Naive thymus-derived CD4-positive, alpha-beta T cell (primary cell): ENCODE measurements at regions of chr1 and their contacts with region 1.

Region 1: GRCh38 chr1:225881969-225882693 is at the start of gene TMEM63A:
- DNase-seq: peak; percentile 83 to 89 (median 87)
- ATAC-seq: peak; percentile 84
- H3K4me3 ChIP-seq: peak within 1 kb of the TSS; percentile 80
- H3K4me3 Mint-ChIP-seq: peak within 1 kb of the TSS; percentile 89 to 99 (median 97)
- H3K27ac ChIP-seq: peak within 1 kb of the TSS; percentile 90
- H3K27ac Mint-ChIP-seq: peak within 1 kb of the TSS; percentile 91 to 98 (median 96)
- H3K4me1 ChIP-seq: peaks cover 41% of the 10 kb centered on the region in 2 donors
- H3K4me1 Mint-ChIP-seq: peaks cover 37 to 50% (median 48%) of the 10 kb centered on the region in 7 donors
- H3K27me3 ChIP-seq: no peaks in the 10 kb centered on the region
- H3K27me3 Mint-ChIP-seq: peaks cover 0 to 21% (median 0%) of the 10 kb centered on the region in 5 donors
- total RNA-seq, gene TMEM63A: 189 to 611 (median 383) TPM

Region 2: GRCh38 chr1:225845571-225846259 is 36.4 kb before region 1 on chr1:
- CTCF ChIA-PET with region 1: interaction called, 4 read pairs
- POLR2A ChIA-PET with region 1: interaction called, 60 read pairs
- intact Hi-C with region 1: loop called in 1 of 2 experiments (anchors 2 kb)
- DNase-seq: peak in 4 of 9 donors; percentile 35 to 55 (median 46)
- ATAC-seq: peak; percentile 36
- H3K4me3 ChIP-seq: no peak overlapping the region
- H3K4me3 Mint-ChIP-seq: no peak overlapping the region
- H3K27ac ChIP-seq: no peak overlapping the region
- H3K27ac Mint-ChIP-seq: peak overlapping the region in 6 of 9 donors; percentile 12 to 98 (median 36)
- H3K4me1 ChIP-seq: peaks cover 37 to 38% of the 10 kb centered on the region in 2 donors
- H3K4me1 Mint-ChIP-seq: peaks cover 19 to 50% (median 43%) of the 10 kb centered on the region in 7 donors
- H3K27me3 ChIP-seq: no peaks in the 10 kb centered on the region
- H3K27me3 Mint-ChIP-seq: no peaks in the 10 kb centered on the region

Region 3: DNA sequence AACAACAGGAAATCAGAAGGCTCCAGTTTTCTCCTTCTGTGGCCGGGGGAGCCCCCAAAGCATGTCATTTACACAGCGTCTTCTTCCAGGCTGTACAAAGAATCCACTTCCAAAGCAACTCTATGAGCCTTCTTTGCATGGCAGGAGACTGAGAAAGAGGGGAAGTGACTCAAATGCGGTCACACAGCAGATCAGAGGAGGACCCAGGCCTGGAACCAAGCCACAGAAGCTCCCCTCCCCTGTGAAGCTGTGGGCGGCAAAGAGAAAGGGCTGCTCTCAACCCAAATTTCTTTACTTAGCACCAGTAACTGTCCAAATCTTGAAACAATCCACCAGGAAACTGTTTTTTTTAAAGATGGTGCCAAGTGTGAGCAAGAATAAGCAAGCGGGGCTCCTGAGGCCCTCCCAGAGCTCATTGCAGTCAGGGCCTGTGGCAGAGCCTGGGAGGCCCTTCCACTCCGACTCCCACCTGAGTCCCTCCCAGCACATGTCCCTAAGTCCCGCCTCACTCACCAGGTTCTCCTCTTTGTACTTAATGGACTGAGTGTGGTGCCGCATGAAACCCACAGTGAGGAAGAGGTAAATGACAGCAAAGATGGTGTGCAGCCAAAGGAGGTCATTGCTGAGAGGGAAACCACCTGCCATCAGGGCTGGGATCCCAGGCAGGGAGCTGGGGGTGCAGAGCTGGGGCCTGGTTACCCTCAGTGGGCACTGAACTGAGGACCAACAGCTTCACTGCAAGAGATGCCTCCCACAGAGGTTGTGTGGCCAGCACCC is 15.9 kb before region 1 on chr1:
- CTCF ChIA-PET with region 1: interaction called, 3 read pairs
- POLR2A ChIA-PET with region 1: interaction called, 55 read pairs
- intact Hi-C with region 1: loop called (anchors 1 kb)
- DNase-seq: peak in 8 of 9 donors; percentile 58 to 78 (median 68)
- ATAC-seq: peak; percentile 91
- H3K4me3 ChIP-seq: no peak overlapping the region
- H3K4me3 Mint-ChIP-seq: peak overlapping the region; percentile 44 to 80 (median 66)
- H3K27ac ChIP-seq: peak overlapping the region; percentile 68
- H3K27ac Mint-ChIP-seq: peak overlapping the region; percentile 68 to 94 (median 85)
- H3K4me1 ChIP-seq: peaks cover 25 to 32% of the 10 kb centered on the region in 2 donors
- H3K4me1 Mint-ChIP-seq: peaks cover 36 to 58% (median 51%) of the 10 kb centered on the region in 7 donors
- H3K27me3 ChIP-seq: no peaks in the 10 kb centered on the region
- H3K27me3 Mint-ChIP-seq: no peaks in the 10 kb centered on the region

Region 4: DNA sequence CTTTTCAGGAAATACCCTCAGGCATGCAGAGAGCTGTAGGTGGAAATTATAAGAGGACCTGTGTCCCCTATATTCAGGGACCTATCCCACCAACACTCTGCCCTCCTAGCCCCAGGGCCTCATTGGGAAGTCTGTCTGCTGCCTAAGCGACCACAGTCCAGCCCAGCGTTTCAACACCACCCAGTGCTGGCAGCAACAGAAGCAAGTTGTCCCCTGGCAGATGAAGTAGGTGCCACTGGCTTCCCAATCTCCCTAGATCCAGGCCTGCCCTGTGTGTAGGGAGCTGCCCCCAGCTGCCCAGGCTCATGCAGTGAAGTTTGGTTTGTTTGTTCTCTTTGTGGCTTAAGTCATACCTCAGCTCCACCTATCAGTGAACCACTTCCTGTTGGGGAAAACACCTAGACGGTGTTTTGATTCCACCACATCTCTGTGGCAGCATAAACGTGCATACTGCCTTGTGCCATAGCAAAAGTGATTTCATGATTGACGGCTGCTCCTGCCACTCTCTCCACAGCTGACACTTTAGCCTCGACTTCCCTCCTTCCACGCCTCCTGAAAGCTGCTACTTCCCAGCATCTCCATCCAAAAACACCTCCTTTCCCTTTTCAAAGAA is 14.9 kb after region 1 on chr1:
- CTCF ChIA-PET with region 1: interaction called, 48 read pairs
- POLR2A ChIA-PET with region 1: interaction called, 396 read pairs
- intact Hi-C with region 1: loop called (anchors 1 kb)
- DNase-seq: peak in 8 of 9 donors; percentile 70 to 92 (median 88)
- ATAC-seq: peak; percentile 97
- H3K4me3 ChIP-seq: peak overlapping the region; percentile 50
- H3K4me3 Mint-ChIP-seq: peak overlapping the region; percentile 74 to 89 (median 84)
- H3K27ac ChIP-seq: peak overlapping the region; percentile 85
- H3K27ac Mint-ChIP-seq: peak overlapping the region; percentile 89 to 100 (median 97)
- H3K4me1 ChIP-seq: peaks cover 35 to 45% of the 10 kb centered on the region in 2 donors
- H3K4me1 Mint-ChIP-seq: peaks cover 36 to 67% (median 54%) of the 10 kb centered on the region in 7 donors
- H3K27me3 ChIP-seq: no peaks in the 10 kb centered on the region
- H3K27me3 Mint-ChIP-seq: peaks cover 0 to 47% (median 0%) of the 10 kb centered on the region in 5 donors

Region 5: DNA sequence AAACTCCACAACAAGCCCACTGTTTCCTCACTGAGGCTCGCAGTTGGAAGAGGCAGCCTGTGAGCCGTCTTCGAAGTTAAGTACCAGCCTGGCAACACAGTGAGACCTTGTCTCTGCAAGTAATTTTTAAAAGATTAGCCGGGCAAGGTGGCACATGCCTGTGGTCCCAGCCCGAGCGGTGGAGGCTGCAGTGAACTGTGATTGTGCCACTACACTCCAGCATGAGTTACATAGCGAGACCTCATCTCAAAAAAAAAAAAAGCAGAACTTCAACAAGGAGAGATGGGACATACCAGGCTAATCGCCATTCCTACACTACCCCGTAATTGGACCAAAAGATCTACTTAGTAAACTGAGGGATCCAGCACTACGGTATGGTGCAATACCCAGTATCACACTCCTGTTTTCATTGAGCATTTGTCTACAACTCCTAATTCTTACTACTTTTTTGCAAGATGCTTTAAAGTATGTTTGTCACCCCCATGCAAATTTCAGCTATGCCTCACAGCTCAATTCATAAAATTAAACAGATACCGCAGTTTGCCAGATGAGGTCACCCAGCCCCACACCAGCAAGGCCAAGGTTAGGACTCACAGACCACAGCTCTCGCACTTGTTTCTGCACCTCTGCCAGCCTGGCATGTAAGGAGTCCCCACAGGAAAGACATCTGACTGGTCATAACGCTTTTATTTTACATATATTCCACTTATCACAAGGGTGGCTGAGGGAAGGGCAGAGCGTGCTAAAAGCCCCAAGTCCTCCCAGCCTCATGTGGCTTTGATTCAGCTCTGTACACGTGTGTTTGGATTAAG is 96.0 kb after region 1 on chr1:
- CTCF ChIA-PET with region 1: interaction called, 4 read pairs
- POLR2A ChIA-PET with region 1: no interaction called
- intact Hi-C with region 1: loop called in 1 of 2 experiments (anchors 1 kb)
- DNase-seq: no peak
- ATAC-seq: peak; percentile 30
- H3K4me3 ChIP-seq: no peak overlapping the region
- H3K4me3 Mint-ChIP-seq: no peak overlapping the region
- H3K27ac ChIP-seq: no peak overlapping the region
- H3K27ac Mint-ChIP-seq: peak overlapping the region in 1 of 9 donors; percentile 20
- H3K4me1 ChIP-seq: no peaks in the 10 kb centered on the region
- H3K4me1 Mint-ChIP-seq: peaks cover 0 to 9% (median 6%) of the 10 kb centered on the region in 7 donors
- H3K27me3 ChIP-seq: no peaks in the 10 kb centered on the region
- H3K27me3 Mint-ChIP-seq: no peaks in the 10 kb centered on the region